Left colon (tissue), 2 donors: ENCODE measurements at regions of chr12 and their contacts with region 1.

Region 1: DNA sequence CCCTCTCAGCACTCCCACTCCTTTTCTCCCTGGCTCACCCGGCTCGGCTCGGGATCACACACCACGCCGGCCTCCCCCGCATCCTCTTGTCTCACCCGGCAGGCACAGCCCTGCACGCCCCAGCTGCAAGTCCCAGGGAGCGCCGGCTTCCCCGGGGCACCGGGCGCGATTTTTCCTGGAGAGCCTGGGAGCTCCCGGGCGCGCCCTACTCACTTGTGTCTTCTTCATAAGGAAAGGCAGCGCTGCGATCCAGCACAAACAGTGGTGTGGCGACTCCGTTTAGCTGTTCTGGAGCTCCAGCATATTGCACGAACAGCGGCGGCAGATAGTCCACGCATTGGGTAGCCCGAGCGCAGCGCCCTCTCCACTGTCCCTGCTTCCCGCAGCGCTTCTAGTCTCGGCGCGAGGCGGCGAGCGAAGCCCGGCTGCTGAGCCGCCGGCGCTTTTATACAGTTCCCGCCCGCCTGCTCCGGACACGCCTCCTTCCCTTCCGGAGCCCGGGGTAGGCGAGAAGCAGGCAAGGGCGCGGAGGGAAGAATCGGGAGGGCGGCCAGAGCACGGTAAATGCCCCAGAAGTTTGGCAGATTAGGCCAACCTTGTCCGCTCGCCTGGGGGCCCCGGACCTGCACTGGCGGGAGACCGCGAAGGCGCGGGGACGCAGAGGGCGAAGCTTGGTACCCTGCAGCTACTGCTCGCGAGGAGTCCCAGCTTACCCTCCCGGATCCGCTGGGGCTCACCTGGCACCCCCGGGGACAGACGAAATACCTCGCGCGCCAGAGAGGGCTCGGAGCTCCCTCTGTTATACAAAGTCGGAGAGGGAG is at the start of gene KITLG:
- DNase-seq: peak; percentile 85 to 89
- ATAC-seq: peak; percentile 90
- total RNA-seq, gene KITLG: 34.2 to 35.2 TPM

Region 2: DNA sequence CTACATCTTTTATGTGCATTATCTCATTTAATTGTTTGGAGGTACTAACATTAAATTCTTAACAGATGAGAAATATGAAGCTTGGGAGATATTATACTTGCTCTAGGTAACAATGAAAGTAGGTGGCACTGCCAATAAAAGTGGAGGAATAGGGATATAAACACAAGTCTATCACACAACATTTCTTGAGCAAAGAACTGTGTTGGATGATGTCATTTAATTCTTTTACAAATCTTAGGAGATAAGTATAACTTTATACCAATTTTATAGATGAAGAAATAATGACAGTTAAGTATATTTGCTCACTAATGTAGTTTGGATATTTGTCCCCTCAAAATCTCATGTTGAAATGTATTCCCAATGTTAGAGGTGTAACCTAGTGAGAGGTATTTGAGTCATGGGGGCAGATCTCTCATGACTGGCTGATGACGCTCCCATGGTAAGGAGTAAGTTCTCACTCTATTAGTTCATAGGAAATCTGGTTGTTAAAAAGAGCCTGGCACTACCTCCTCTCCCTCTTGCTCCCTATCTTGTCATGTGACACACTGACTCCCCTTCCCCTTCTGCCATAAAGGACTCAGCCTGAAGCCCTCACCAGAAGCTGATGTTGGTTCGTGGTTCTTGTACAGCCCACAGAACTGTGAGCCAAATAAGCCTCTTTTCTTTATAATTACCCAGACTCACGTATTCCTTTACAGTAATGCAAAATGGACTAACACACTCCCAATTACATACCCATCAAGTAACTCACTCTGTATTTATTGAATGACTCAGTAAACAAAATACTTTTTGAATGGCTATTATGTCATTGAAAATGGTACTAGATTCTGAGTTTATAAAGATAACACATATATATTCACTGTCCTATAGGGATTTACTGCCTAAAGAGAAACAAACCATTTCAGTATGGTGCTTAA is 146.8 kb after region 1 on chr12:
- intact Hi-C with region 1: no loop called
- DNase-seq: no peak
- ATAC-seq: no peak

Region 3: DNA sequence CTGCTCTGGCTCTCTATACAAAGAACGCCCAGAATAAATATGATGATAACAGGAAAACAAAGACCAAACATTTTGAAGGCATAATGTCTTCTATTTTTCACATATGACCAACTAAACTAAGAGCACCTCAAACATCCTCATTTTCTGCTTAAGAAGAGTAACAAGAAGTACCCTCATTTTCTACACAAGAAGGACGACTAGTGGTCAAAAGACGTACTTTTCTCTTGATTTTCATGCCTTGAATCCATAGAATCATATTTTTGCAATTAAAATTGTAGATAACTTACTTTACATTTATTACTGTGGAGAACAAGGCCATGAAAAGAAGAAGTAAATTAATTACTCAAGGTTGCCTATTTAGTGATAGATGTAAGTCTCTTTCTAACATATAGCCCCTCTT is 413.4 kb after region 1 on chr12:
- intact Hi-C with region 1: loop called in 1 of 2 experiments (anchors 10 kb)
- DNase-seq: no peak
- ATAC-seq: peak; percentile 59